A549 (cell line): ENCODE measurements at regions of chr10 and their contacts with region 1.

Region 1: GRCh38 chr10:70169649-70170364 is 507 bp downstream of the SAR1A start:
- DNase-seq: no peak
- ATAC-seq: peak; percentile 61 to 64
- H3K4me3 ChIP-seq: peak overlapping the region; percentile 92
- H3K27ac ChIP-seq: peak overlapping the region; percentile 80 to 89
- H3K4me1 ChIP-seq: peaks cover 22% of the 10 kb centered on the region; the same call in 2 of the 3 replicates
- CTCF ChIP-seq: no peak
- EP300 ChIP-seq: no peak
- POLR2A ChIP-seq: no peak
- RAD21 ChIP-seq: no peak

Region 2: DNA sequence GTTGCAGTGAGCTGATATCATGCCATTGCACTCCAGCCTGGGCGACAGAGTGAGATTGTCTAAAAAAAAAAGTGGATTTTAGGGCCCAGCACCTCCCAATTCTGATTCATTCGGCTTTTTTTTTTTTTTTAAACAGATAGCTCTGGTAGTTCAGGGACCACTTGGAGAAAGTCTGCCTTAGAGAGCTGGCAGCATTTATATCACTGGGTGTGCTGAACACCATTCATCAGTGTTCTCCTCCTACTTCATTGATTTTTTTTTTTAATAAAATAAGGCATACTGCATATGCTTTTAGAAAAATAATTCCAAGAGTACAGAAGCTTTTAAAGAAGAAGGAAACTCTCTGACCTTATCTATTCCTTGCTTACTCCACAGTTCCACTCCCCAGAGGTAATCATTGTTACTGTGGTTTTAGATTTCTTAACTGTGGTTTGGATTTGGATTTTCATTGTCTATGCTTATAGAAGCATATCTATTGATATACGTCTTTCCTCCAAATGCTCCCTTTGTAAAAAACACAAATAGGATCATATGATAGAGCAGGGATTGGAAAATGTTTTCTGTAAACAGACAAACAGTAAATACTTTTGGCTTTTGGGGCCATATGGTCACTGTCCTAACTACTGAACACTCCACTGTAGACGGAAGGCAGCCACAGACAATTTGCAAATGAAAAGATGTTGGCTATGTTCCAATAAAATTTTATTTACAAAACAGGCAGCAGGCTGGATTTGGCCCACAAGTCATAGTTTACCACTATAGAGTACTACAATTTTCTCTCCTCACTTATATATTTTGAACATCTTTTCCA is 21.6 kb after region 1 on chr10:
- CTCF ChIA-PET with region 1: interaction called, 3 read pairs
- POLR2A ChIA-PET with region 1: interaction called, 18 read pairs
- DNase-seq: no peak
- ATAC-seq: no peak; a peak in 1 of 6 replicates
- H3K4me3 ChIP-seq: no peak overlapping the region
- H3K27ac ChIP-seq: peak overlapping the region in 1 of 2 experiments; percentile 45; a peak in 4 of 6 replicates
- H3K4me1 ChIP-seq: peaks cover 20% of the 10 kb centered on the region
- CTCF ChIP-seq: no peak
- EP300 ChIP-seq: no peak
- POLR2A ChIP-seq: no peak
- RAD21 ChIP-seq: no peak

Region 3: DNA sequence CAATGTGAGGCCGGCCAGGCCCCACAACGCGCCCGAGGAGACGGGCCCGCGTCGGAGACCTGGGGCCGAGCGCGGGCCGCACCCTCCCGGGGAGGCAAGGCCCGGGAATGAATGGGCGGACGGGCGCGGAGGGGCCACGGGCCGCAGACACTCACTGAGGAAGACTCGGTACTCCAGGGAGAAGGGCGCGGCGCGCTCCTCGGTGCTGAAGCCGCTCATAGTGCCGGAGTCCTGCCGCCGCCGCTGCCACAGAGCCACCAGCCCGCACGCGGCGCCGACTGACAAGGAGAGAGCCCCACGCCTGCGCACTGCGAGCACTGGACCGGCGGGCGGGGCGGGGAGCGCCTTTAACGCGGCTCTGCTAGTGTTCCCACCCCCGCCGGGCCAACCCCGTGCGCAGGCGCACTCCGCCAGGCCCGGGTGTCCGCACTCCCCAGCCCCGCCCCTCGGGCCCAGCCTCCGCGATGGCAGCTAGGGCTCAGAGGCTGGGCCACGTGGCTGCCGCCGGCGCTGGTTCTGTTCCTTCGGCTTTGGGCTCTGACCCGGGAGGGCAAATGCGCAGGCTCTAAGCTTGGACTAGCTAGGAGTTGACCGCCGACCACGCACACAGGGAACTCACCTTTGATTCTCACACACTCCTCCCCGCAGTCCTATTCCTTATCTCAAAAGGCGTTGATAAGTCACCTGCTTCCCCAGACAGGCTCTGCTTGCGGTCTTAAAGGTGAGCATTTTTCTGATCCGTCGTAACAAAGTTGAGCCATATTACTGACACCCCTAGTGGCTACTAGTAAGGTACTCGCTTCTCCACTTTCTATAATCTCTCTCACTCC is 63.5 kb after region 1 on chr10 and contains the start of gene PPA1:
- CTCF ChIA-PET with region 1: no interaction called
- POLR2A ChIA-PET with region 1: interaction called, 12 read pairs
- DNase-seq: peak; percentile 96 to 97
- ATAC-seq: peak; percentile 94 to 97
- H3K4me3 ChIP-seq: peak within 1 kb of the TSS; percentile 91
- H3K27ac ChIP-seq: peak within 1 kb of the TSS; percentile 89 to 90
- H3K4me1 ChIP-seq: peaks cover 26% of the 10 kb centered on the region
- CTCF ChIP-seq: peak; percentile 38
- EP300 ChIP-seq: no peak
- POLR2A ChIP-seq: peak; percentile 80
- RAD21 ChIP-seq: no peak
- polyA plus RNA-seq, gene PPA1: 219 and 273 TPM in 2 replicates

Region 4: DNA sequence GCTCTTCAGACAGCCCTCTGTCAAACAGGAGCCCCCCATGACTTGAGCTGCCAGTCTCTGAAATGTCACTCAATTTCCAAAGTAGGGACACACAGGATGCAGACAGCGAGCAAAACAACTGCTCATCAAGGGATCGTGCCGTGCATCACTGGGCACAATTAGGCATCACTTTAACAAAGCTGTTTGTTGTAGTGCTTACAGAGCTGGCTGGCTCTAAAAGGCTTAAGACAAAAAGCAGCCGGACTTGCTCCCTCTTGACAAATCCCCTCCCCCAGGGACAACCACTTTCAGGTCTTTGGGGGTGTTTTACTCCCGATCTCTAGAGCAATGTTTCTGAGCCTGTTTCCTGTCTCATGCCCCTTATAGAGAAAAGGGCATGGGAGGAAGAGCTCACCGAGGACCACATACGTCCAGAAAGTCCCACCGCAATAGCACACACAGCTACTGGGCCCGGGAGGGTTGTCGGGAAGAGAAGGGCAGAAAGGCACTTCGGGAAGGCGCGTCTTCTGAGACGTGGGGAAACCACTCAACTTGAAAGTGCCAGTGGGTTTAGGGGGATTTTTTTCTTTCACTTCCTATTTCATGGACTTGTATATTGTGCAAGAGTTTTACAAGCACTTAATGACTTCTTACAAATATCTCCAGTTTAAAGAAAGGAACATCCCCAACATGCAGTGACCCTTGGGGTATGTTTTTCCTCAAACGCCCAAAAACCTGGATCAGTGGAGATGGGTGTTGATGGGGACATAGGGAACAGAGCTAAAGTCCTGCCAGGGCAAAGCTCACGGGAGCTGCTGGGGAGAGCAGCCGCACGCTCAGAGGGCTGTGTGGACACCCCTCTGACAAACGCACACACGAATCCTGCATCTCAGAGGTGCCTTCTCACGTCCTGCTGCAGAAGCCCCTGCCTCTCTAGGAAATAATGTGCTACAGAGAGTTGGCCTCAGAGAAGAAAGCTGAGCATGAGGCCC is 185.5 kb after region 1 on chr10:
- CTCF ChIA-PET with region 1: no interaction called
- POLR2A ChIA-PET with region 1: no interaction called
- DNase-seq: no peak
- ATAC-seq: no peak
- H3K4me3 ChIP-seq: no peak overlapping the region
- H3K27ac ChIP-seq: no peak overlapping the region
- H3K4me1 ChIP-seq: peaks cover 36% of the 10 kb centered on the region
- CTCF ChIP-seq: no peak
- EP300 ChIP-seq: no peak
- POLR2A ChIP-seq: no peak
- RAD21 ChIP-seq: no peak